ENCODE measurements at regions of chr5 and their contacts with region 1.

Region 1: GRCh38 chr5:146027751-146028150 is 77.6 kb downstream of the PLAC8L1 start:
- DNase-seq: peak; percentile 89
- H3K4me3 Mint-ChIP-seq: peak overlapping the region; percentile 52
- H3K27ac Mint-ChIP-seq: peak overlapping the region; percentile 78
- H3K4me1 Mint-ChIP-seq: peaks cover 20% of the 10 kb centered on the region
- H3K27me3 Mint-ChIP-seq: no peaks in the 10 kb centered on the region
- CTCF ChIP-seq: no peak

Region 2: GRCh38 chr5:145975361-145976066 is 52.2 kb before region 1 on chr5:
- CTCF ChIA-PET with region 1: no interaction called
- POLR2A ChIA-PET with region 1: interaction called, 6 read pairs
- intact Hi-C with region 1: loop called (anchors 5 kb)
- DNase-seq: peak; percentile 97
- H3K4me3 Mint-ChIP-seq: no peak overlapping the region
- H3K27ac Mint-ChIP-seq: peak overlapping the region; percentile 89
- H3K4me1 Mint-ChIP-seq: peaks cover 59% of the 10 kb centered on the region
- H3K27me3 Mint-ChIP-seq: no peaks in the 10 kb centered on the region
- CTCF ChIP-seq: no peak

Region 3: DNA sequence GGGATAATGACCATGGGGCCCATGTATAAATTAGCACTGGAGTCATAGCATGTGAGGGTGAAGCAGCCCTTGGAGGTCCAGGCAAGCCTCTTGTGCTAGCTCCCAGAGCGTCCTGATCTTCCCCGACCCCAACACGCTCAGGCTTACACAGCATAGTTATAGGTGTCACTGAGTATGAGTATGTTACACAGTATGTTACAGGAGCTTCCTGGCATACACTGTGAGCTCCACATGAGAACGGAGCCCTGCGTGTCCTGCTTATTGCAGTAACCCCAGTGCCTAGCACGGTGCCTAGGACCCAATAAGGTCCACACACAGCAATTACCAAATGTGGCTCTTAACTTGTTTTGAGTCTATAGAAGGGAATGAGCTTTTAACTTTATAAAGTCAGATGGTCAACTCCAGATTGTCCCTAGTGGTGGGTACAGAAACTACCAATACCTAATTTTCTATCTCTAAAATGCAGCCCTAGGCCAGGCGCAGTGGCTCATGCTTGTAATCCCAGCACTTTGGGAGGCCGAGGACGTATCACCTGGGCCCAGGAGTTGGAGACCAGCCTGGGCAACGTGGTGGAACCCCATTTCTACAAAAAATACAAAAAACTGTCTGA is 13.5 kb after region 1 on chr5:
- CTCF ChIA-PET with region 1: interaction called, 25 read pairs
- POLR2A ChIA-PET with region 1: interaction called, 36 read pairs
- intact Hi-C with region 1: no loop called
- DNase-seq: peak; percentile 34
- H3K4me3 Mint-ChIP-seq: no peak overlapping the region
- H3K27ac Mint-ChIP-seq: peak overlapping the region; percentile 62
- H3K4me1 Mint-ChIP-seq: peaks cover 53% of the 10 kb centered on the region
- H3K27me3 Mint-ChIP-seq: no peaks in the 10 kb centered on the region
- CTCF ChIP-seq: no peak